Ascending aorta (tissue), 2 donors: ENCODE measurements at regions of chr15 and their contacts with region 1.

Region 1: DNA sequence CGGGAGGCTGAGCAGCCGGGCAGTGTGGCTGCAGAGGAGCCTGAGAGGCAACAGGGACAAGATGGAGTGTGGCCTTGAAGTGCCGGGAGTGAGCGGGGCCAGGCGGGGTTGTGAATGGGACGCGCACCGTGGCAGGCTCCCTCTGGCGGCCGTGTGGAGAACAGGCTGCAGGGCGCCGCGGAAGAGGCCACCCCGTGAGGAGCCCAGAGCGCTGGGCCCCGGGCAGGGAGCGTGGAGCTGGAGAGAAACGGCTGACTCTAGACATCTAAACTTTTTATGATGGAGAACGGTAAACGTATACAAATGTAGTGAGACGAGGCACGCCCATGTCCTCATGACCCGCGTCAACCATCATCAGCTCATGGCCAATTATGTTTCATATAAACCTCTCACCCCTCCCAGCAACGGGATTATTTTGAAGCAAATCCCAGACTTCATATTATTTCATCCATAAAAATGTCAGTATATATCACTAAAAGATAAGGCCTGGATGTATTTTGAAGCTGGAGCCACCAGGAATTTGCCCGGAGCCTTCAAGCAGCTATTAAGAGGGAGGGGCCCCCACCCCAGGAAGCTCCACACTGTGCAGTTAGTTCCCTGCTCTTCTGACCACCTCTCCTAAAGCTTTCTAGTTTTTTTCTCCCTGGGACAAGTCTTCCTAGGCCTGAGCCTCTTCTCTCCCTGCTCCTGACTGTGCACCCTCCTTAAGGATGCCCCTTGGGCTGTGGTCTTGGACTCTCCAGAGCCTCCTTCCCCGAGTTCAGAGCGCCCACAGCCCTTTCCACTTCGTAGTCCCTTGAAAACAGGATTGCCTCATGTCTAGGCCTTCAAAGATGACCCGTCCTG is 149.4 kb downstream of the SMAD6 start:
- DNase-seq: peak in 1 of 2 donors; percentile 93
- H3K4me3 ChIP-seq: peak overlapping the region in 1 of 2 donors; percentile 1
- H3K27ac ChIP-seq: peak overlapping the region; percentile 91 to 94
- H3K4me1 ChIP-seq: peaks cover 19 to 32% of the 10 kb centered on the region in 2 donors
- H3K27me3 ChIP-seq: no peaks in the 10 kb centered on the region
- CTCF ChIP-seq: peak; percentile 97

Region 2: GRCh38 chr15:66386204-66387123 is 465.0 kb before region 1 on chr15 and contains the start of gene MAP2K1:
- intact Hi-C with region 1: loop called (anchors 10 kb)
- DNase-seq: peak; percentile 93 to 99
- H3K4me3 ChIP-seq: peak within 1 kb of the TSS; percentile 53 to 99
- H3K27ac ChIP-seq: peak within 1 kb of the TSS; percentile 88 to 99
- H3K4me1 ChIP-seq: peaks cover 6 to 10% of the 10 kb centered on the region in 2 donors
- H3K27me3 ChIP-seq: no peaks in the 10 kb centered on the region
- CTCF ChIP-seq: peak; percentile 58 to 89 (median 78)
- total RNA-seq, gene MAP2K1: 21.2 TPM

Region 3: DNA sequence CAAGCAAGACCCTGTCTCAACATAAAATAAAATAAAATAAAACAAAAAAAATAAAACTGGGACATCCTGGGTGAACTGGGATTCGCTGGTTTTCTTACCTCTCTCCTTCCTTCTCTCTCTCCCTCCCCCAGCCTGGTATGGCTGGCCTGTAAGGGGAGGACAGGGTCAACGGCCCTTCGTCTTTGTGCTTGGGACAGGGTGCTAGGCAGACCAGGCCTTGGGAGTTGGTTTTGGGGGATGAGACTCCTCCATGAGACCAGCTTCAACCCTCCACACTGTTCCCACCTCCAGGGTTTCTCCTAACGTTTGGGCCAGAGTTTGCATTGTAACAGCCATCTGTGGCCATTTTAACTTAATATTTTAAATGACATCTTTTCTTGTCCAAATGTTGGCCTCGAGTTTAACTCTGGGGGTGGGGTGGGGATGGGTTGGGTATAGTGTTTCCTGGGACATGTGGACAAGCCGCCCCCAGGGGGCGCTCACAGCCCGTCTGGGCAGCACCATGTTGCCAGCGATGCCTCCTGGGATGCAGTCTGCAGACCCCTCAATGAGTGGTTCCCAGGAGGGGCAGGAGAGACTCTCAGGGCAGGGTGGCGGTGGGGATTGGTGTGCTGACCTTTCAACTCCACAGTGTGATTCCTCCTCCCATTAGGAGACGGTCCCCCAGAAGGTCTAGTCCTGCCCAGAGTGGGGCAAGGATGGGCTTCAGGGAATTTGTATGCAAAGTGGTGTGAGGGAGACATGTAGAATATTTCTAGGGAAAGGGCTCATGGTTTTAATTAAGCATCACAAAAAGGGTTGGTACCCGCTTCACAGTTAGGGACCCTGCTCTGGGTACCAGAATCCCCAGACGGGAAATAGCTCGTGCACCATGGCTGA is 247.9 kb before region 1 on chr15:
- intact Hi-C with region 1: loop called (anchors 1 kb)
- DNase-seq: peak in 1 of 2 donors; percentile 75
- H3K4me3 ChIP-seq: no peak overlapping the region
- H3K27ac ChIP-seq: no peak overlapping the region
- H3K4me1 ChIP-seq: peaks cover 0 to 3% of the 10 kb centered on the region in 2 donors
- H3K27me3 ChIP-seq: no peaks in the 10 kb centered on the region
- CTCF ChIP-seq: peak; percentile 78 to 90 (median 80)

Region 4: DNA sequence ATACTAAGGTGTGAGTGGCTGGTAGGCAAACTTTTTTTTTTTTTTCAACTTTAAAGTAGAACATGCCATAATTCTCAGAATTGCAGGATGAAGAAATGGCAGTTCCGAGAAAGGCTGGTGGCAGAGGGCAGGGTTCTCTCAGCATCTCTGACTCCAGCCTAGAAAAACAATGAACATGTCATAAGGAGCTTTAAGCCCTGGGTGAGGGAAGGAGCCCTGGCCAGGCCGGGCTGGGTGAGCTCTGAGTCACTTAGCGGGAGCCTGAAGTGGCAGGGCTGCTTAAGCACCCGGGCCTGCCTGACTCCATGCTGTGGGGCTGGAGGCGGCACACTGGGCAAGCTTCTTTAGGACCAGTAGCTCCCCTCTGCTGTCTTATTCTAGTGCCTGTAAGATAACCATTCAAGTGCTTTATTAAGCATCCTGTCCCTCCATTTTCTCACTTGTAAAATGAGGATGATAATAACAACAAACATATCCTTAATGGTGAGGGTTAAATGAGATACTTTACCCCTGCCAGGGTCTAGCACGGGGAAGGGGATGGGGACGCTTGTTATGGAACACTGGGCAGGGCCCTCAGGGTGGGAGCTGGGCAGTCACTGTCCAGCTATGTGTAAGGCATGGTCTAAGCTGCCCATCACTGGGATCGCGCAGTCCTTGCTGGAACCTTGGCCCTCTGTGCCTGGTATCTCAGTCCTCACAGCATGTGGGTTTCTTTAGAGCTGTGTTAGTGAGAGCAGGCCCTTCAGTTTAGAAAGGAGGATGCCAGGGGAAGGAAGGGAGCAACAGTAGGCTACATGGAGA is 131.0 kb before region 1 on chr15:
- intact Hi-C with region 1: loop called (anchors 5 kb)
- DNase-seq: peak; percentile 71 to 94
- H3K4me3 ChIP-seq: no peak overlapping the region
- H3K27ac ChIP-seq: peak overlapping the region; percentile 88 to 96
- H3K4me1 ChIP-seq: peaks cover 25 to 56% of the 10 kb centered on the region in 2 donors
- H3K27me3 ChIP-seq: no peaks in the 10 kb centered on the region
- CTCF ChIP-seq: no peak

Region 5: GRCh38 chr15:66789029-66790025 is 62.1 kb before region 1 on chr15:
- intact Hi-C with region 1: loop called (anchors 2 kb)
- DNase-seq: peak in 1 of 2 donors; percentile 34
- H3K4me3 ChIP-seq: no peak overlapping the region
- H3K27ac ChIP-seq: peak overlapping the region; percentile 73 to 79
- H3K4me1 ChIP-seq: peaks cover 5 to 10% of the 10 kb centered on the region in 2 donors
- H3K27me3 ChIP-seq: no peaks in the 10 kb centered on the region
- CTCF ChIP-seq: peak; percentile 30 to 57 (median 41)

Region 6: DNA sequence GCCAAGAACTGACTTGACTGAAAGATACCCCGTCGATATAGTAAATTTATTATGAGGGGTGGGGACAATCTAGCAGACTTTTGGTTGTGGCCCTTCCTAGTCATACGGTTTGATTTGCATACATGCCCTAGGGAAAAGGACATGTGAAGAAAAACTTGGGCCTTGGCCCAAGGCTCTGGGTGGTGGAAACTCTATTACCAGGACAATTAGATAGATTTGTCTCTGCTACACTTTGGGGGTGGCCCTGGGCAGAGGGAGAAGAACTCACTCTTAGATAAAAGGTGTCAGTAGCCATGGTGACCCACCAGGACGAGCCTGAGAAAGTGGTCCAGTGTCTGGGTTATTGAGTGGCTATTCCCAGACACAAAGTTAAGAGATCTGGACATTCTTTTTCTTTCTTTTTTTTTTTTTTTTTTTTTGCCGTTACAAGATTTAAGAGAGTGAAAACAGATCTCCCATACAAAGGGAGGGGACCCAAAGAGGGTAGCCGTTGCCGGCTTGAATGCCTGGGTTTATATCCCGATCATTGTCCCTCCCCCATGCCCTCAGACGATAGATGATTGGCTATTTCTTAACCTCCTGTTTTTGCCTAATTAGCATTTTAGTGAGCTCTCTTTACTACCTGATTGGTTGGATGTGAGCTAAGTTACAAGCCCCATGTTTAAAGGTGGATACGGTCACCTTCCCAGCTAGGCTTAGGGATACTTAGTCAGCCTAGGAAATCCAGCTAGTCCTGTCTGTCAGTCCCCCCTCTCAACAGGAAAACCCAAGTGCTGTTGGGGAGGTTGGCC is 117.6 kb after region 1 on chr15:
- intact Hi-C with region 1: no loop called
- DNase-seq: no peak
- H3K4me3 ChIP-seq: no peak overlapping the region
- H3K27ac ChIP-seq: no peak overlapping the region
- H3K4me1 ChIP-seq: no peaks in the 10 kb centered on the region
- H3K27me3 ChIP-seq: no peaks in the 10 kb centered on the region
- CTCF ChIP-seq: no peak